GM12878 (cell line): ENCODE measurements at regions of chr18 and their contacts with region 1.

Region 1: GRCh38 chr18:21991081-21991581 is 178.3 kb upstream of the GATA6 start:
- DNase-seq: no peak
- ATAC-seq: no peak
- H3K4me3 ChIP-seq: no peak overlapping the region
- H3K27ac ChIP-seq: no peak overlapping the region
- H3K4me1 ChIP-seq: no peaks in the 10 kb centered on the region
- H3K27me3 ChIP-seq: no peaks in the 10 kb centered on the region
- CTCF ChIP-seq: no peak
- EP300 ChIP-seq: no peak
- POLR2A ChIP-seq: no peak
- RAD21 ChIP-seq: no peak

Region 2: GRCh38 chr18:21943456-21943855 is 47.7 kb before region 1 on chr18:
- CTCF ChIA-PET with region 1: no interaction called
- POLR2A ChIA-PET with region 1: no interaction called
- RAD21 ChIA-PET with region 1: no interaction called
- SMC1A ChIA-PET with region 1: no interaction called
- in situ Hi-C with region 1: loop called (anchors 5 kb)
- intact Hi-C with region 1: no loop called
- DNase-seq: no peak
- ATAC-seq: no peak
- H3K4me3 ChIP-seq: no peak overlapping the region
- H3K27ac ChIP-seq: no peak overlapping the region
- H3K4me1 ChIP-seq: no peaks in the 10 kb centered on the region
- H3K27me3 ChIP-seq: no peaks in the 10 kb centered on the region
- CTCF ChIP-seq: no peak
- EP300 ChIP-seq: no peak
- POLR2A ChIP-seq: no peak
- RAD21 ChIP-seq: no peak